AG04450 (cell line): ENCODE measurements at regions of chr18 and their contacts with region 1.

Region 1: GRCh38 chr18:32271672-32272208 is 81.9 kb downstream of the MEP1B start:
- DNase-seq: peak; percentile 3
- H3K4me3 ChIP-seq: no peak overlapping the region
- H3K27ac ChIP-seq: no peak overlapping the region
- H3K27me3 ChIP-seq: no peaks in the 10 kb centered on the region
- CTCF ChIP-seq: peak; percentile 82

Region 2: GRCh38 chr18:32158108-32158624 is 113.6 kb before region 1 on chr18:
- CTCF ChIA-PET with region 1: interaction called, 17 read pairs
- POLR2A ChIA-PET with region 1: no interaction called
- DNase-seq: peak; percentile 72
- H3K4me3 ChIP-seq: no peak overlapping the region
- H3K27ac ChIP-seq: no peak overlapping the region
- H3K27me3 ChIP-seq: peaks cover 9% of the 10 kb centered on the region
- CTCF ChIP-seq: peak; percentile 92

Region 3: GRCh38 chr18:32261003-32261402 is 10.7 kb before region 1 on chr18:
- CTCF ChIA-PET with region 1: interaction called, 10 read pairs
- POLR2A ChIA-PET with region 1: no interaction called
- DNase-seq: no peak
- H3K4me3 ChIP-seq: no peak overlapping the region
- H3K27ac ChIP-seq: no peak overlapping the region
- H3K27me3 ChIP-seq: no peaks in the 10 kb centered on the region
- CTCF ChIP-seq: peak; percentile 13; the same call in 1 of the 2 replicates

Region 4: GRCh38 chr18:32284284-32284683 is 12.5 kb after region 1 on chr18:
- CTCF ChIA-PET with region 1: interaction called, 73 read pairs
- POLR2A ChIA-PET with region 1: no interaction called
- DNase-seq: no peak
- H3K4me3 ChIP-seq: no peak overlapping the region
- H3K27ac ChIP-seq: no peak overlapping the region
- H3K27me3 ChIP-seq: no peaks in the 10 kb centered on the region
- CTCF ChIP-seq: no peak

Region 5: GRCh38 chr18:32301976-32302743 is 30.4 kb after region 1 on chr18:
- CTCF ChIA-PET with region 1: interaction called, 10 read pairs
- POLR2A ChIA-PET with region 1: no interaction called
- DNase-seq: peak; percentile 58
- H3K4me3 ChIP-seq: no peak overlapping the region
- H3K27ac ChIP-seq: peak overlapping the region; percentile 25
- H3K27me3 ChIP-seq: no peaks in the 10 kb centered on the region
- CTCF ChIP-seq: no peak

Region 6: DNA sequence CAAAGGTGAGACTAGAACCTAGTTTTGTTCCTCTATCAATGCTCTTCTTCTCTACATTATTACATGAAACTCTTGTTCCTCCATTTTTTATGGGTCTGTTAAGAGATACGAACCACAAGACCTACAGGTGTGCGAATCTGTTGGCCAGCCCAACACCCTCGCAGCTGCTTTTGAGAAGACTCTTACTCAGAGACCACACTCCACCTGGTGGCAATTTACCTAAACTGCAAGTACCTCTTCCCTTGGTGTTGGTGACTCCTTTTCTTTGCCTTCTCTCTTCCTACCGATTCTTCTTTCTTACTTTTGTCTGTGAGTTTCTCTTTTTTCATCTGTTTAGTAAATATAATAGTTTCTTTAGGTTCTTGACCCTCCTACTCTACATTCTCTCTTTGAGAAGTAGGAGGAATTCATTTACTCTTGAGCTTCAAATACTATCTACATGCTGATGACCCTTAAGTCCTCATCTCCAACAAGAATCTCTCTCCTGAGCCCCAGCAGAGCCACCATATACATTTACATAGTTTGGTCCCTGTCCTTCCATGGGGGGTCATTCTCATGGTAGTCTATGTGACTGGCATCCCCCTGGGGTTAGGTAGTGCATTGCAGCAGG is 280.8 kb after region 1 on chr18:
- CTCF ChIA-PET with region 1: interaction called, 48 read pairs
- POLR2A ChIA-PET with region 1: no interaction called
- DNase-seq: peak; percentile 41
- H3K4me3 ChIP-seq: no peak overlapping the region
- H3K27ac ChIP-seq: no peak overlapping the region
- H3K27me3 ChIP-seq: peaks cover 3% of the 10 kb centered on the region
- CTCF ChIP-seq: peak; percentile 77

Region 7: GRCh38 chr18:32714571-32715148 is 442.9 kb after region 1 on chr18:
- CTCF ChIA-PET with region 1: interaction called, 10 read pairs
- POLR2A ChIA-PET with region 1: no interaction called
- DNase-seq: peak; percentile 23
- H3K4me3 ChIP-seq: no peak overlapping the region
- H3K27ac ChIP-seq: no peak overlapping the region
- H3K27me3 ChIP-seq: no peaks in the 10 kb centered on the region
- CTCF ChIP-seq: peak; percentile 86

Region 8: GRCh38 chr18:33350256-33350655 is 1078.5 kb after region 1 on chr18:
- CTCF ChIA-PET with region 1: no interaction called
- POLR2A ChIA-PET with region 1: no interaction called
- DNase-seq: no peak
- H3K4me3 ChIP-seq: no peak overlapping the region
- H3K27ac ChIP-seq: no peak overlapping the region
- H3K27me3 ChIP-seq: no peaks in the 10 kb centered on the region
- CTCF ChIP-seq: no peak